Right lobe of liver (tissue), 6 donors: ENCODE measurements at regions of chr3 and their contacts with region 1.

Region 1: GRCh38 chr3:168047190-168047795 is 48.4 kb downstream of the GOLIM4 start:
- DNase-seq: no peak
- ATAC-seq: peak; percentile 88 to 95 (median 94)
- H3K4me3 ChIP-seq: no peak overlapping the region
- H3K27ac ChIP-seq: no peak overlapping the region
- H3K4me1 ChIP-seq: peaks cover 0 to 16% (median 7%) of the 10 kb centered on the region in 4 donors
- H3K27me3 ChIP-seq: no peaks in the 10 kb centered on the region
- CTCF ChIP-seq: peak; percentile 77 to 98 (median 90)
- POLR2A ChIP-seq: no peak

Region 2: DNA sequence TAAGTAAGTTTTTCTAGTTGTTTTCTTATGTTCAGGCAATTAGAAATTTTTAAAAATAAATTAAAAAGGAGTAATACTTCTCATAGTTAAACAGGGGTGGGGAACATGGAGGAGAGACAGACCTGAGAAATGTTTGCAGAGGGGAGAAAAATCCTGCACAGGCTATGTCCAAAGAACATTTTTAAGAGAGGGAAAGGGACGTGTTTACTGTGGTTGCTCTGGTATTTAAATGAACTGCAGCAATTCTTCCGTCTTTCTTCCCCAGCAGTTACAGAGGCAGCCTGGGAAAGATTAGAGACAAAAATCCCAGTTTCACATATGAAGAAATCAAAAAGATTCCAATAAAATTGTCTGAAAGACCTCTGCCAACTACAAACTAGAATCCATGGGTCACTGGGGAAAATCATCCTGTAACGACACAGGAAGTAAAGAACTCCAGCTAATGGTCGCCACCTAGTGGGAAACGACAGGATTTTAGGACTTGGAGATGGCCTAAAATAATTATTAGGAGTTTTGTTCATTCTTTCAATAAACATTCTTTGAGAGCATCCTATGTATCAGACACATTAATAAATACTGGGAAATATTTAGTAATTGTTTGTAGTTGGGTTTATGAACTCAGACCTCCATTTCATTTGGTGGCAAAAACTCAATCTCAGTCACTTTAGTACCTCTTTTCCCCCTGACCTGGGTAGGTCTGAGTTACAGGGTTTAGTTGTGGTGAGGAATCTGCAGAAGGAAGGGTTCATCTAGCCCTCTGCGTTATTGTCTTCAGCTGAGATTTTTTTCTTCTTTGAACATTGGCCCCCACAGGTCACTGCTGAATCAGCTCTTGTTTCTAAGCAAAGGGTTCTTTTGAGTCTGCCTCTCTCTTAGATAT is 118.3 kb after region 1 on chr3:
- intact Hi-C with region 1: loop called (anchors 5 kb)
- DNase-seq: peak in 1 of 3 donors; percentile 61
- ATAC-seq: peak; percentile 96 to 99 (median 98)
- H3K4me3 ChIP-seq: no peak overlapping the region
- H3K27ac ChIP-seq: no peak overlapping the region
- H3K4me1 ChIP-seq: peaks cover 0 to 4% (median 0%) of the 10 kb centered on the region in 4 donors
- H3K27me3 ChIP-seq: no peaks in the 10 kb centered on the region
- CTCF ChIP-seq: peak; percentile 73 to 92 (median 76)
- POLR2A ChIP-seq: no peak

Region 3: DNA sequence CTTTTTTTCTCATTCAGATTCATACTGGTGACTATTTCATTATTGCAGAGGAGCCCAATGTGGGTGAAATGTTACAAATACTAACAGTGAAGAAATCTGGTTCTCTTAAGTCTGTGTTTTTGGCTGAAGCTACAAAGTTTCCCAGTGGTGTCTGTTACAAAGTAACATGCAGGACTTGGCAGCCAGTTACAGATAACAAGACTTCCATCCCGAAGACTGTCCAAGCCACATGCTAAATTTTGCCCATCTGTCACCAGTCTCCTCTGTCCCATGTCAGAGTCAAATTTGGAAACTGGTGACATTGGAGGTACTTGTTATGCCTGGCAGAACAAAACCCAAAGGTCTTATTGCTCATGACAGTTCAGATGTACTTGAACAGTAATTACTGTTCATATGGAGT is 317.7 kb after region 1 on chr3:
- intact Hi-C with region 1: no loop called
- DNase-seq: no peak
- ATAC-seq: no peak
- H3K4me3 ChIP-seq: no peak overlapping the region
- H3K27ac ChIP-seq: no peak overlapping the region
- H3K4me1 ChIP-seq: no peaks in the 10 kb centered on the region
- H3K27me3 ChIP-seq: no peaks in the 10 kb centered on the region
- CTCF ChIP-seq: no peak
- POLR2A ChIP-seq: no peak